ENCODE measurements at regions of chr3 and their contacts with region 1.

Region 1: GRCh38 chr3:177525987-177526712 is 328.9 kb upstream of the TBL1XR1 start:
- DNase-seq: peak; percentile 44
- H3K4me3 Mint-ChIP-seq: no peak overlapping the region
- H3K27ac Mint-ChIP-seq: peak overlapping the region; percentile 82
- H3K4me1 Mint-ChIP-seq: peaks cover 66% of the 10 kb centered on the region
- H3K27me3 Mint-ChIP-seq: no peaks in the 10 kb centered on the region
- CTCF ChIP-seq: no peak

Region 2: DNA sequence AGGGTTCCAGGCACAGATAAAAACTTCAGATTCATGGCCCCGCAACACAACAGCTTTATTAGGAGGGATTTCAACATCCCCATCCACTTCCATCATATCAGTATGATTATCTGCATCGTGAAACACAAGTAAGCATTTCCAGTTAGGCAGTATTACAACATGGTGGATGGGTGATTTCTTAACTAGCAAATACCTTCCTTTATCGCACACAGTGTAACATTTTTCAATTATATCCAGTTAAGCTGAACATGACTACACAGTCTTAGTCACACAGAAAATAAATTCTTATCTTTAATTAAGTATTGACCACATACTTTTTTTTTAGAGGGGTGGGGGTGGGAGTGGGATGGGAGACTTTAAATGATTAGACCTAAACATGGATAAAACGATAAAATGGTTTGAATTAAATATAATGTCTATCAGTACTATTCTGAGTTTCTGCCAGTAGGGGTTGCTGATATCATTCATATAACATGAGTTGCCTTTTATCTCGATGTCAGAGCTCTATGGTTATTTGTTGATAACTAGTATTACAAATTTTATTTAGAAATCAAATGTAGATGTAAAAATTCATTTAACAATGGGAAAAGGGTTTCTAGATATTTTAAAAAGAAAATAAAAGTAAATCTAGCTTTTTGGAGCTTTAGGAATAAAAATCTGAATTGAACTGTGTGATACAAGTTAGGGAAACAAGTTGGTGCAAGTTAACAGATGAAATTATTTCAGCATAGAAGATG is 475.5 kb before region 1 on chr3:
- CTCF ChIA-PET with region 1: interaction called, 7 read pairs
- intact Hi-C with region 1: loop called (anchors 2 kb)
- DNase-seq: peak; percentile 21
- H3K4me3 Mint-ChIP-seq: no peak overlapping the region
- H3K27ac Mint-ChIP-seq: no peak overlapping the region
- H3K4me1 Mint-ChIP-seq: no peaks in the 10 kb centered on the region
- H3K27me3 Mint-ChIP-seq: no peaks in the 10 kb centered on the region
- CTCF ChIP-seq: peak; percentile 77

Region 3: GRCh38 chr3:177437513-177438337 is 88.4 kb before region 1 on chr3:
- CTCF ChIA-PET with region 1: no interaction called
- intact Hi-C with region 1: no loop called
- DNase-seq: no peak
- H3K4me3 Mint-ChIP-seq: no peak overlapping the region
- H3K27ac Mint-ChIP-seq: no peak overlapping the region
- H3K4me1 Mint-ChIP-seq: peaks cover 15% of the 10 kb centered on the region
- H3K27me3 Mint-ChIP-seq: no peaks in the 10 kb centered on the region
- CTCF ChIP-seq: no peak

Region 4: GRCh38 chr3:177603148-177603603 is 77.0 kb after region 1 on chr3:
- CTCF ChIA-PET with region 1: interaction called, 3 read pairs
- intact Hi-C with region 1: loop called (anchors 5 kb)
- DNase-seq: no peak
- H3K4me3 Mint-ChIP-seq: no peak overlapping the region
- H3K27ac Mint-ChIP-seq: peak overlapping the region; percentile 59
- H3K4me1 Mint-ChIP-seq: peaks cover 48% of the 10 kb centered on the region
- H3K27me3 Mint-ChIP-seq: no peaks in the 10 kb centered on the region
- CTCF ChIP-seq: no peak

Region 5: GRCh38 chr3:177679568-177680441 is 153.7 kb after region 1 on chr3:
- CTCF ChIA-PET with region 1: no interaction called
- intact Hi-C with region 1: no loop called
- DNase-seq: no peak
- H3K4me3 Mint-ChIP-seq: no peak overlapping the region
- H3K27ac Mint-ChIP-seq: no peak overlapping the region
- H3K4me1 Mint-ChIP-seq: peaks cover 9% of the 10 kb centered on the region
- H3K27me3 Mint-ChIP-seq: no peaks in the 10 kb centered on the region
- CTCF ChIP-seq: no peak

Region 6: GRCh38 chr3:177777699-177778098 is 251.5 kb after region 1 on chr3:
- CTCF ChIA-PET with region 1: interaction called, 10 read pairs
- intact Hi-C with region 1: loop called (anchors 1 kb)
- DNase-seq: peak; percentile 75
- H3K4me3 Mint-ChIP-seq: no peak overlapping the region
- H3K27ac Mint-ChIP-seq: no peak overlapping the region
- H3K4me1 Mint-ChIP-seq: peaks cover 12% of the 10 kb centered on the region
- H3K27me3 Mint-ChIP-seq: no peaks in the 10 kb centered on the region
- CTCF ChIP-seq: peak; percentile 95

Region 7: GRCh38 chr3:177977381-177978158 is 451.4 kb after region 1 on chr3:
- CTCF ChIA-PET with region 1: no interaction called
- intact Hi-C with region 1: loop called (anchors 5 kb)
- DNase-seq: peak; percentile 39
- H3K4me3 Mint-ChIP-seq: no peak overlapping the region
- H3K27ac Mint-ChIP-seq: peak overlapping the region; percentile 59
- H3K4me1 Mint-ChIP-seq: peaks cover 37% of the 10 kb centered on the region
- H3K27me3 Mint-ChIP-seq: no peaks in the 10 kb centered on the region
- CTCF ChIP-seq: no peak

Region 8: GRCh38 chr3:178385280-178385952 is 859.3 kb after region 1 on chr3:
- CTCF ChIA-PET with region 1: interaction called, 5 read pairs
- intact Hi-C with region 1: loop called (anchors 1 kb)
- DNase-seq: peak; percentile 61
- H3K4me3 Mint-ChIP-seq: no peak overlapping the region
- H3K27ac Mint-ChIP-seq: no peak overlapping the region
- H3K4me1 Mint-ChIP-seq: no peaks in the 10 kb centered on the region
- H3K27me3 Mint-ChIP-seq: no peaks in the 10 kb centered on the region
- CTCF ChIP-seq: peak; percentile 78

Measured in Calu3 (cell line).